Activated CD8-positive, alpha-beta T cell treated with anti-CD3 and anti-CD28 coated beads for 36 hours (primary cell): ENCODE measurements at regions of chr15 and their contacts with region 1.

Region 1: GRCh38 chr15:40782580-40783227 is 12.9 kb downstream of the C15orf62 start:
- DNase-seq: peak; percentile 87
- ATAC-seq: peak; percentile 90
- H3K4me3 Mint-ChIP-seq: no peak overlapping the region
- H3K27ac Mint-ChIP-seq: no peak overlapping the region
- H3K4me1 Mint-ChIP-seq: peaks cover 17% of the 10 kb centered on the region
- H3K27me3 Mint-ChIP-seq: no peaks in the 10 kb centered on the region
- CTCF ChIP-seq: peak; percentile 77

Region 2: GRCh38 chr15:39908186-39908585 is 874.5 kb before region 1 on chr15:
- CTCF ChIA-PET with region 1: no interaction called
- POLR2A ChIA-PET with region 1: no interaction called
- intact Hi-C with region 1: no loop called
- DNase-seq: no peak
- ATAC-seq: no peak
- H3K4me3 Mint-ChIP-seq: no peak overlapping the region
- H3K27ac Mint-ChIP-seq: no peak overlapping the region
- H3K4me1 Mint-ChIP-seq: no peaks in the 10 kb centered on the region
- H3K27me3 Mint-ChIP-seq: peaks cover 2% of the 10 kb centered on the region
- CTCF ChIP-seq: no peak

Region 3: GRCh38 chr15:40684381-40684780 is 98.3 kb before region 1 on chr15:
- CTCF ChIA-PET with region 1: interaction called, 20 read pairs
- POLR2A ChIA-PET with region 1: no interaction called
- intact Hi-C with region 1: loop called (anchors 2 kb)
- DNase-seq: no peak
- ATAC-seq: no peak
- H3K4me3 Mint-ChIP-seq: no peak overlapping the region
- H3K27ac Mint-ChIP-seq: no peak overlapping the region
- H3K4me1 Mint-ChIP-seq: no peaks in the 10 kb centered on the region
- H3K27me3 Mint-ChIP-seq: no peaks in the 10 kb centered on the region
- CTCF ChIP-seq: no peak

Region 4: DNA sequence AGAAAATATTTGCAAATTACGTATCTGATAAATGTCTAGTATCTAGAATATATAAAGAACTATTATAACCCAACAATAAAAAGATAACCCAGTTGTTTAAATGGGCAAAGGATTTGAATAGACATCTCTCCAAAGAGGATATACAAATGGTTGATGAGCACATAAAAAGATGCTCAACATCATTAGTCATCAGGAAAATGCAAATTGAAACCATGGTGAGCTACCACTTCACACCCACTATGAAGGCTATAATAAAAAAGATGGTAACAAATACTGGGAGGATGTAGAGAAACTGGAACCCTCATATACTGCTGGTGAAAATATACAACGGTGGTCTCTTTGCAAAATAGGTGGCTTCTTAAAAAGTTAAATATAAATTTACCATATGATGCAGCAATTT is 59.8 kb before region 1 on chr15:
- CTCF ChIA-PET with region 1: interaction called, 10 read pairs
- POLR2A ChIA-PET with region 1: no interaction called
- intact Hi-C with region 1: no loop called
- DNase-seq: no peak
- ATAC-seq: peak; percentile 55
- H3K4me3 Mint-ChIP-seq: no peak overlapping the region
- H3K27ac Mint-ChIP-seq: no peak overlapping the region
- H3K4me1 Mint-ChIP-seq: peaks cover 17% of the 10 kb centered on the region
- H3K27me3 Mint-ChIP-seq: no peaks in the 10 kb centered on the region
- CTCF ChIP-seq: no peak

Region 5: GRCh38 chr15:40743921-40744814 is 38.5 kb before region 1 on chr15:
- CTCF ChIA-PET with region 1: interaction called, 32 read pairs
- POLR2A ChIA-PET with region 1: interaction called, 6 read pairs
- intact Hi-C with region 1: no loop called
- DNase-seq: peak; percentile 85
- ATAC-seq: peak; percentile 96
- H3K4me3 Mint-ChIP-seq: peak overlapping the region; percentile 36
- H3K27ac Mint-ChIP-seq: peak overlapping the region; percentile 88
- H3K4me1 Mint-ChIP-seq: peaks cover 33% of the 10 kb centered on the region
- H3K27me3 Mint-ChIP-seq: no peaks in the 10 kb centered on the region
- CTCF ChIP-seq: no peak

Region 6: DNA sequence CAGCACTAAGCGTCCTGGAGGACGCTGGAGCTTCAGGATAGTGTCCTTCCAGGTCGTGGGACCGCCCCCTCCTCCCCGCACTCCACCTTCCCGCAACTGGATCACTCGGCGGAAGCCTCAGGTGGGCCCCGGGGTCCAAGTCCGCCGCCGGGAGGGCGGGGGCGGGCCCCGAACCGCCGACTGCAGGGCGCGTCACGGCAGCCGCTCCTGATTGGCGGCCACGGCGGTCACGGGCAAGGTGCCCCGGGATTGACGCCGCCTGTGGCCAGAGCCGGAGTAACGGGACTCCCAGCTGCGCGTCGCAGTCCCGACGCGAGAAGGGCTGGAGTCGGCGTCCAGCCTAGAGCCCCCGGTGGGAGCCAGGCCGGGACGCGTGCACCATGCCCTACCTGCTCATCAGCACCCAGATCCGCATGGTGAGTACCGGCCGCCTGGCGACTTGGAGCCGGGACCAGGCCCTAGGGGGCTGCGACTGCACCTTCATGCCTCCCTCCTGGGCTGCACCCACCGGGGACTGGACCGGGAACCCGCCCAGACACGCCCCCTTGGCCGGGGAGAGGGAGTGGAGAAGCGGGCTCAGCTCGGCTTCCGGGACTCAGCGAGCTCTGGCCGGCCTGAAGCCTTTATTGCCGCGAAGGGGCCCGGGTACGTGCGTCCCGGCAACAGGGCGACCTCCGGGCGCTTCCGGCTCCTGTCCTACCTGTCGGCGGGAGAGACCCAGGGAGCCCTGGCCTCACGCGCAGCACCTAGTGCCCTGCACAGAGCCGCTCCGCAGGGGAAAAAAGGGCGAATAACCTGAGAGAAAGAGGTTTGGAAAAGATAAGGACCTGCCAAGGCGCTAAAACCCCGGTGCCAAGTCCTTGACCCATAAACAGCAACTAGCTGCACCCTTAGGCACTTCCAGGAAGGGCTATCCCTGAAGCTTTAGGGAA is 18.6 kb before region 1 on chr15 and contains the start of gene GCHFR:
- CTCF ChIA-PET with region 1: interaction called, 27 read pairs
- POLR2A ChIA-PET with region 1: interaction called, 14 read pairs
- intact Hi-C with region 1: no loop called
- DNase-seq: peak; percentile 78
- ATAC-seq: peak; percentile 54
- H3K4me3 Mint-ChIP-seq: peak within 1 kb of the TSS; percentile 86
- H3K27ac Mint-ChIP-seq: peak within 1 kb of the TSS; percentile 92
- H3K4me1 Mint-ChIP-seq: peaks cover 42% of the 10 kb centered on the region
- H3K27me3 Mint-ChIP-seq: no peaks in the 10 kb centered on the region
- CTCF ChIP-seq: peak; percentile 43
- total RNA-seq, gene GCHFR: 44.8 to 46.6 TPM

Region 7: GRCh38 chr15:40793216-40793989 is 10.7 kb after region 1 on chr15:
- CTCF ChIA-PET with region 1: interaction called, 15 read pairs
- POLR2A ChIA-PET with region 1: interaction called, 3 read pairs
- intact Hi-C with region 1: no loop called
- DNase-seq: peak; percentile 27
- ATAC-seq: no peak
- H3K4me3 Mint-ChIP-seq: no peak overlapping the region
- H3K27ac Mint-ChIP-seq: no peak overlapping the region
- H3K4me1 Mint-ChIP-seq: peaks cover 26% of the 10 kb centered on the region
- H3K27me3 Mint-ChIP-seq: no peaks in the 10 kb centered on the region
- CTCF ChIP-seq: no peak

Region 8: GRCh38 chr15:41018502-41018901 is 235.8 kb after region 1 on chr15:
- CTCF ChIA-PET with region 1: no interaction called
- POLR2A ChIA-PET with region 1: no interaction called
- intact Hi-C with region 1: no loop called
- DNase-seq: no peak
- ATAC-seq: no peak
- H3K4me3 Mint-ChIP-seq: no peak overlapping the region
- H3K27ac Mint-ChIP-seq: no peak overlapping the region
- H3K4me1 Mint-ChIP-seq: peaks cover 3% of the 10 kb centered on the region
- H3K27me3 Mint-ChIP-seq: no peaks in the 10 kb centered on the region
- CTCF ChIP-seq: no peak